A673 (cell line): ENCODE measurements at regions of chr15 and their contacts with region 1.

Region 1: DNA sequence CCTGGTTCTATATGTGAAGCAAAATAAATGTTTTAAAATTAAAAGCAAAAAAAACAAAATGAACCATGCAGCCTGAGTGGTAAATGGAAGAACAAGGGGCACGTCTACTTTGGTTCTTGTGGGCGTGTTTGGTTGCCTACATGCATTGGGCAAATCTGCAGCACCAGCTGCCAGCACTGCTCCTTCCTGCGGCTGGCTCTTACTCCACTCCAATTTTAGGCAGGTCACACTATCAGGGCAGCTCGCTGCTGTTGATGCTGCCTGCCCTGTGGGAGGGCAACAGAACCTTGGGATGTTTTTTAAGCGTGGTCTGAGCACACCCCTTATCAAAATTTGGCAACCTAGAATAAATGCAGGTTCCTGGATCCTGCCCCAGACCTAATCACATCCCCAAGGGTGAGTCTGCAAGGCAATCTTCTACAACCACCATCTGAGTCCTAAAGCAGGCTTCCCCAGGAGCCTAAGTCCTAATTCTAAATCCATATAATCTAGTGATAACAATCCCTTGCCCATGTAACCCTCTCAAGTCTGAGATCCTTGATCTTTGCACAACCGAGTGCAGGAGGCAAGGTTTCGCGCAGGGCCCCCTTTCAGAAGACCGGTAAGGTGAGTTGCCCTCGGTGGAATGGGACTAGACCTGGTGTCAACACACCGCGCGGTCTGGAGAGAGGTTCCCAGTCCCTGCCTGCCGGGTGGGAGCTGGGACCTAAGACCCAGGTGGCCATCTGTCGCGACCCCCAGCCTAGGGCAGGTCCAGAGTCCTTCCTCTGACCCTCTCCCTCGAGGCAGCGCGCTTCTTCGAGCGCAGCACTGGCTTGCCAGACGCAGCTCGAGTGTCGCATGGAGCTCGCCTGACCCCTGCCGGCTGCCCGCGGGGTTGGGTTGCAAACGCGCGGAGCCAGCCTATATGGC is 15.9 kb downstream of the IVD start:
- DNase-seq: peak; percentile 78
- H3K4me3 ChIP-seq: no peak overlapping the region
- H3K27ac ChIP-seq: no peak overlapping the region
- H3K4me1 ChIP-seq: no peaks in the 10 kb centered on the region
- H3K27me3 ChIP-seq: no peaks in the 10 kb centered on the region
- CTCF ChIP-seq: peak; percentile 92

Region 2: DNA sequence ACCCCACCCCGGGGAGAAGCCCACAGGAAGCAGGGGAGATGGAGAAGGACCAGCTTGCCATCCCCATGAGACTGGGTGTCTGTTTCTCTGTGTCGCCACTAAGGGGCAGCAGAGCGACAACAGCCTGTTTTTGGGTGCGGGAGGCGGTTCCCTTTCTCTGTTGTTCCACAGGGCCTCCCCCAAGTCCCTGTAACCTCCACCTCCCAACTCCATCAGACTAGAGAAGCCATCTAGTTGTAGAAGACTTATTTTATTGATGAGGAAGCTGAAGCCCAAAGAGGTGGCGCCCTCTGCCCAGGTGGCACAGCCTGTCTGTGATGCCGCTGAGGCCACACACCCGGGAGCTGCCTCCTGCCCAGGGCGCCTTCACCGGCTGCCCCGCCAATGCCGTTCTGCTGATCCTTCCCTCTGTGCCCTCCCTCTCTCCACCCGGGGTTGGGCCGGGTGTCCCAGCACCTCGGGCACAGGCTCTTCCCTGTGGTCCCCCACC is 76.8 kb before region 1 on chr15:
- CTCF ChIA-PET with region 1: interaction called, 17 read pairs
- POLR2A ChIA-PET with region 1: no interaction called
- intact Hi-C with region 1: loop called (anchors 2 kb)
- DNase-seq: peak; percentile 74
- H3K4me3 ChIP-seq: no peak overlapping the region
- H3K27ac ChIP-seq: no peak overlapping the region
- H3K4me1 ChIP-seq: peaks cover 18% of the 10 kb centered on the region
- H3K27me3 ChIP-seq: no peaks in the 10 kb centered on the region
- CTCF ChIP-seq: peak; percentile 89

Region 3: DNA sequence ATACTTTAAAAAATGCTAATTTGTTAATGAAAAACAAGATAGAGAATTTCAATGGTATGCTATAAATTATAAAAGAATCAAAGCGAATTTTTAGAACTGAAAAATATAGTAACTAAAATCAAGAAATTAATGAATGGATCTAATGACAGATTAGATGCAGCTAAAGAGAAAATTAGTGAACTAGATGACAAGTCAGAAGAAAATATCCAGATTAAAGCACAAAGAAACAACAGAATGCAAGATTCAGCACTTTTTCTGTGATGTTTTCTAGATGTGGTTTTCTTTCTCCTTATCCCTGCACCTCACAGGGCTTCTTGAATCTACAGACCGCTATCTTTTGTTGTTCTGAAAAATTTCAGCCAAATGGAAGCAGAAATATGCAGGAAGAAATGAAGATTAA is 640.2 kb after region 1 on chr15:
- CTCF ChIA-PET with region 1: no interaction called
- POLR2A ChIA-PET with region 1: no interaction called
- intact Hi-C with region 1: no loop called
- DNase-seq: no peak
- H3K4me3 ChIP-seq: no peak overlapping the region
- H3K27ac ChIP-seq: no peak overlapping the region
- H3K4me1 ChIP-seq: no peaks in the 10 kb centered on the region
- H3K27me3 ChIP-seq: no peaks in the 10 kb centered on the region
- CTCF ChIP-seq: no peak